GM12878 (cell line): ENCODE measurements at regions of chr12 and their contacts with region 1.

Region 1: DNA sequence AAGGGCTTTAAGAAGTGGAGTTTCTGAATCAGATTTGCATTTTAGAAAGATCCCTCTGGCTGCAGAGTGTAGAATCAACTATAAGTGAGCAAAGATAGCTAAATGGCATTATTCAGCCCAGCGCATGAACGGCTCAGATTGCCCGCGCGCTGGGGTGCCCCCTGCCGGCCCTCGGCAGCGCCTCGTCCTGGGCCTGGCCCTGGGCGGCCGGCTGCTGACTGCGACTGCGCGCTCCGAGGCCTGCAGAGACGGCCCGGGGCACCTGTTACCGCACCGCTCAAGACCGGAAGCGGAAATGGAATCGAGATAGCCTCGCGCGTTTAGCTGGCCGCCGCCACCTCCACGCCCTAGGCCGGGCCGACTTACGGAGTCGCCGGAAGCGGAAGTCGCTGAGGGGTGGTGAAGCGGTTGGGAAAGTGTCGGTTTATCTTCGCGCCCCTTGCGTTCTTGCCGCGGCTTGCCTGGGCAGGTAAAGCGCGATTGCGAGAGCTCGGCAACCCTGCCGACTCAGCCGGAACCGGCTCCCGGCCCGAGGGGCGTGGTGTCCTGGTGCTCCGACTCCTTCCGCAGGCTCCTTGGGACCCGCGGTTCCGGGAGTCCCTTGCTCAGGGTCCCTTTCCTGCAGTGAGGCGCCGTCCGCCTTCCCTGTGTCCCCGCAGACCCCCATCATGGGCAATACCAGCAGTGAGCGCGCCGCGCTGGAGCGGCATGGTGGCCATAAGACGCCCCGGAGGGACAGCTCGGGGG is at the start of gene PRKAB1:
- DNase-seq: peak; percentile 89
- ATAC-seq: peak; percentile 91
- H3K4me3 ChIP-seq: peak within 1 kb of the TSS; percentile 98
- H3K27ac ChIP-seq: peak within 1 kb of the TSS; percentile 97
- H3K4me1 ChIP-seq: peaks cover 21% of the 10 kb centered on the region
- H3K27me3 ChIP-seq: no peaks in the 10 kb centered on the region
- CTCF ChIP-seq: peak; percentile 78 to 97 (median 93); a peak in 4 of 6 replicates
- EP300 ChIP-seq: peak in 1 of 2 experiments; percentile 36; a peak in 1 of 4 replicates
- POLR2A ChIP-seq: peak; percentile 97
- RAD21 ChIP-seq: peak; percentile 51
- polyA plus RNA-seq, gene PRKAB1: 24.6 to 28.8 TPM

Region 2: GRCh38 chr12:118135788-118136558 is 1531.8 kb before region 1 on chr12 and contains the start of gene PEBP1:
- CTCF ChIA-PET with region 1: no interaction called
- POLR2A ChIA-PET with region 1: no interaction called
- RAD21 ChIA-PET with region 1: no interaction called
- SMC1A ChIA-PET with region 1: no interaction called
- in situ Hi-C with region 1: loop called (anchors 25 kb)
- intact Hi-C with region 1: no loop called
- DNase-seq: peak; percentile 77
- ATAC-seq: peak; percentile 98
- H3K4me3 ChIP-seq: peak within 1 kb of the TSS; percentile 86
- H3K27ac ChIP-seq: peak within 1 kb of the TSS; percentile 86
- H3K4me1 ChIP-seq: peaks cover 11% of the 10 kb centered on the region
- H3K27me3 ChIP-seq: no peaks in the 10 kb centered on the region
- CTCF ChIP-seq: no peak
- EP300 ChIP-seq: no peak
- POLR2A ChIP-seq: peak; percentile 97
- RAD21 ChIP-seq: no peak
- polyA plus RNA-seq, gene PEBP1: 79.4 to 150 TPM

Region 3: GRCh38 chr12:119444456-119445044 is 223.2 kb before region 1 on chr12:
- CTCF ChIA-PET with region 1: interaction called, 4 read pairs
- POLR2A ChIA-PET with region 1: no interaction called
- RAD21 ChIA-PET with region 1: no interaction called
- SMC1A ChIA-PET with region 1: no interaction called
- in situ Hi-C with region 1: no loop called
- intact Hi-C with region 1: loop called (anchors 5 kb)
- DNase-seq: peak; percentile 28
- ATAC-seq: peak; percentile 89
- H3K4me3 ChIP-seq: no peak overlapping the region
- H3K27ac ChIP-seq: no peak overlapping the region
- H3K4me1 ChIP-seq: no peaks in the 10 kb centered on the region
- H3K27me3 ChIP-seq: peaks cover 0 to 3% of the 10 kb centered on the region in 2 experiments; a peak in 1 of 4 replicates
- CTCF ChIP-seq: peak; percentile 95 to 99 (median 98); a peak in 5 of 6 replicates
- EP300 ChIP-seq: no peak
- POLR2A ChIP-seq: no peak
- RAD21 ChIP-seq: peak; percentile 63

Region 4: GRCh38 chr12:119631930-119632678 is 35.6 kb before region 1 on chr12:
- CTCF ChIA-PET with region 1: no interaction called
- POLR2A ChIA-PET with region 1: no interaction called
- RAD21 ChIA-PET with region 1: no interaction called
- SMC1A ChIA-PET with region 1: no interaction called
- in situ Hi-C with region 1: no loop called
- intact Hi-C with region 1: no loop called
- DNase-seq: no peak
- ATAC-seq: no peak
- H3K4me3 ChIP-seq: no peak overlapping the region
- H3K27ac ChIP-seq: no peak overlapping the region
- H3K4me1 ChIP-seq: no peaks in the 10 kb centered on the region
- H3K27me3 ChIP-seq: no peaks in the 10 kb centered on the region; a peak in 1 of 4 replicates
- CTCF ChIP-seq: no peak
- EP300 ChIP-seq: no peak
- POLR2A ChIP-seq: no peak
- RAD21 ChIP-seq: no peak

Region 5: DNA sequence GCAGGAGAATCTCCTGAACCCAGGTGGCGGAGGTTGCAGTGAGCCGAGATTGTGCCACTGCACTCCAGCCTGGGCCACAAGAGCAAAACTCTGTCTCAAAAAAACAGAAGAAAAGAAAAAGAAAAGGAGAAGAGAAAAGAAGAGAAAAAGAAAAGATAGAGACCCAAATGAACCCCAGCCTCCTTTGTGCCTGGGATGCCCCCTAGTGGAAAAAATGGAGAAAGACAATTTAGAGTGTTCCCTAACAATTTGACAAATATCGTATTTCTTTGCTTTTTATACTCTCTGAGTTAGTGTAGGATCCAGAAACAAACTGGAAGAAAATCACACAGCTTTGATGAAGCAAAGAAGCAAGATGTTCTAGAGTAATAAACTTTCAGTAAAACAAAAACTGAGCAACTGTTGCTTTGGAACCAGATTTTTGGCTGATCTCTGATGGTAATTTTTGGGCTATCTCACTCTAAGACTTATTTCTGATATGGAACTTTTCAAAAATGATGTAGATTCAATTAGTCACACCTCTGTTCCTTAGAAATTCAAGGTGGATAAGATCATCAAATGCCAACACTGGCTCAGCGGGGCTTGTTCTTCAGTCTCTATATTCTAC is 18.4 kb before region 1 on chr12:
- CTCF ChIA-PET with region 1: interaction called, 15 read pairs
- POLR2A ChIA-PET with region 1: no interaction called
- RAD21 ChIA-PET with region 1: interaction called, 6 read pairs
- SMC1A ChIA-PET with region 1: interaction called, 4 read pairs
- in situ Hi-C with region 1: no loop called
- intact Hi-C with region 1: no loop called
- DNase-seq: no peak
- ATAC-seq: no peak
- H3K4me3 ChIP-seq: no peak overlapping the region
- H3K27ac ChIP-seq: no peak overlapping the region
- H3K4me1 ChIP-seq: no peaks in the 10 kb centered on the region
- H3K27me3 ChIP-seq: no peaks in the 10 kb centered on the region
- CTCF ChIP-seq: peak; percentile 61 to 69 (median 62)
- EP300 ChIP-seq: no peak
- POLR2A ChIP-seq: no peak
- RAD21 ChIP-seq: peak; percentile 67

Region 6: DNA sequence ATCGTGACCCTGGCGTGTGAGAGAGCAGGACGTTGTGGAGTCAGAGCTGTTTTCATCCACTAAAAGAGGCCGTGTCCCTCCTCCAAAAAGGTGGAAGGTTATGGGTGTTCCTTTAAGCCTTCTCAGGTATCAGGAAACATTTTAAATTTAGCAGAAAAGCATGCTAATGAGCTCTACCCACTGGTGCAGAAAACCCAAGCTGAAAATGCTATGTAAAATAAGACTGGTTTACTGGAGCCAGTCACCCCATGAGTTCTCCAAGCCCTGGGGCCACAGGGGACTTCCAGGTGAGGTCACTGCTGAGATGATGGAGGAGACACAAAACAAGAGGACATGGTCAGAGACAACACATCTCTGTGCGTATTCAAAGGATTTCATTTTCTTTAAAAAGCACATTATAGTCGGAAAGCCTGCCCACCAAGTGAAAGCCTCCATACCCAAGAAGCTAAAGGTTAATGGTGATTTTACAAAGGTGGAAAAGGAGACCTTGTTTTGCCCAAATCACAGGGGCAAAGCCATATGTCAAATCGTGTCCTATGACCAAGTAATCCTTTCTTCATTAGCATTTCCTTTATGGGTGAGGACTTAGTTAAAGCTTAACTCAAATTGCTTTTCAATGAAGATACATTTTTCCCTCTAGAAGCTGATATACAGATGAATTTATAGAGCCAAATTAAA is 14.3 kb after region 1 on chr12:
- CTCF ChIA-PET with region 1: interaction called, 91 read pairs
- POLR2A ChIA-PET with region 1: interaction called, 54 read pairs
- RAD21 ChIA-PET with region 1: interaction called, 41 read pairs
- SMC1A ChIA-PET with region 1: interaction called, 83 read pairs
- in situ Hi-C with region 1: no loop called
- intact Hi-C with region 1: no loop called
- DNase-seq: peak; percentile 51
- ATAC-seq: peak; percentile 93
- H3K4me3 ChIP-seq: peak overlapping the region; percentile 9; the same call in 1 of the 2 replicates
- H3K27ac ChIP-seq: peak overlapping the region; percentile 77
- H3K4me1 ChIP-seq: peaks cover 20% of the 10 kb centered on the region
- H3K27me3 ChIP-seq: no peaks in the 10 kb centered on the region
- CTCF ChIP-seq: no peak
- EP300 ChIP-seq: peak in 1 of 2 experiments; percentile 25; a peak in 1 of 4 replicates
- POLR2A ChIP-seq: peak; percentile 46; the same call in 1 of the 2 replicates
- RAD21 ChIP-seq: no peak

Region 7: DNA sequence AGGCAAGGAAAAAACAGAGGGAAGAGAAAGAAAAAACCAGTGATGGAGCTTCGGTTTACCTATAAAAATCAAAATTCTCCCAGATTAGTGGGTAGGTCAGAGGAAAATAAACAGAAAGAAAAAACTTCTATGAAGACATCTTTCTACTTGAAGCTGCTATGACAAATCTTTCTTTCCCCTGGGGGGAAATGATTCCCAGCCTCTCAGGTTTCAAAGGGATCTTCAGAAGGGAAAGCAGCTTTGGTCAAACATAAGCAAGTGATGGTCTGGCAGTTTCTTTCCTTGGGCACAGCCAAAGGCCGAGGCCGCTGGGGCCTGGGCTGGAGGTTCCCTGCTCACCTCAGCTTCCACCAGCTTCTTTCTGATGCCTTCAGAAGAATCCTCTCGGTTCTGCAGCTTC is 104.7 kb after region 1 on chr12:
- CTCF ChIA-PET with region 1: no interaction called
- POLR2A ChIA-PET with region 1: no interaction called
- RAD21 ChIA-PET with region 1: no interaction called
- SMC1A ChIA-PET with region 1: no interaction called
- in situ Hi-C with region 1: no loop called
- intact Hi-C with region 1: no loop called
- DNase-seq: no peak
- ATAC-seq: no peak
- H3K4me3 ChIP-seq: no peak overlapping the region
- H3K27ac ChIP-seq: no peak overlapping the region
- H3K4me1 ChIP-seq: no peaks in the 10 kb centered on the region
- H3K27me3 ChIP-seq: no peaks in the 10 kb centered on the region
- CTCF ChIP-seq: no peak
- EP300 ChIP-seq: no peak
- POLR2A ChIP-seq: no peak
- RAD21 ChIP-seq: no peak

Region 8: GRCh38 chr12:119902084-119902509 is 234.3 kb after region 1 on chr12:
- CTCF ChIA-PET with region 1: no interaction called
- POLR2A ChIA-PET with region 1: no interaction called
- RAD21 ChIA-PET with region 1: interaction called, 3 read pairs
- SMC1A ChIA-PET with region 1: no interaction called
- in situ Hi-C with region 1: no loop called
- intact Hi-C with region 1: loop called (anchors 5 kb)
- DNase-seq: peak; percentile 33
- ATAC-seq: peak; percentile 99
- H3K4me3 ChIP-seq: no peak overlapping the region
- H3K27ac ChIP-seq: no peak overlapping the region
- H3K4me1 ChIP-seq: no peaks in the 10 kb centered on the region
- H3K27me3 ChIP-seq: no peaks in the 10 kb centered on the region
- CTCF ChIP-seq: peak; percentile 89 to 94 (median 91)
- EP300 ChIP-seq: no peak
- POLR2A ChIP-seq: no peak
- RAD21 ChIP-seq: peak; percentile 96

Region 9: GRCh38 chr12:119988782-119989668 is 321.3 kb after region 1 on chr12 and contains the start of gene BICDL1:
- CTCF ChIA-PET with region 1: interaction called, 3 read pairs
- POLR2A ChIA-PET with region 1: no interaction called
- RAD21 ChIA-PET with region 1: interaction called, 6 read pairs
- SMC1A ChIA-PET with region 1: no interaction called
- in situ Hi-C with region 1: no loop called
- intact Hi-C with region 1: loop called (anchors 5 kb)
- DNase-seq: peak; percentile 69
- ATAC-seq: peak; percentile 91
- H3K4me3 ChIP-seq: peak within 1 kb of the TSS; percentile 82
- H3K27ac ChIP-seq: no peak within 1 kb of the TSS
- H3K4me1 ChIP-seq: peaks cover 6% of the 10 kb centered on the region
- H3K27me3 ChIP-seq: no peaks in the 10 kb centered on the region
- CTCF ChIP-seq: peak in 1 of 3 experiments; percentile 16; a peak in 1 of 6 replicates
- EP300 ChIP-seq: no peak
- POLR2A ChIP-seq: peak; percentile 60
- RAD21 ChIP-seq: no peak
- polyA plus RNA-seq, gene BICDL1: 0.72 to 1.2 TPM